ENCODE measurements at regions of chr16 and their contacts with region 1.

Region 1: DNA sequence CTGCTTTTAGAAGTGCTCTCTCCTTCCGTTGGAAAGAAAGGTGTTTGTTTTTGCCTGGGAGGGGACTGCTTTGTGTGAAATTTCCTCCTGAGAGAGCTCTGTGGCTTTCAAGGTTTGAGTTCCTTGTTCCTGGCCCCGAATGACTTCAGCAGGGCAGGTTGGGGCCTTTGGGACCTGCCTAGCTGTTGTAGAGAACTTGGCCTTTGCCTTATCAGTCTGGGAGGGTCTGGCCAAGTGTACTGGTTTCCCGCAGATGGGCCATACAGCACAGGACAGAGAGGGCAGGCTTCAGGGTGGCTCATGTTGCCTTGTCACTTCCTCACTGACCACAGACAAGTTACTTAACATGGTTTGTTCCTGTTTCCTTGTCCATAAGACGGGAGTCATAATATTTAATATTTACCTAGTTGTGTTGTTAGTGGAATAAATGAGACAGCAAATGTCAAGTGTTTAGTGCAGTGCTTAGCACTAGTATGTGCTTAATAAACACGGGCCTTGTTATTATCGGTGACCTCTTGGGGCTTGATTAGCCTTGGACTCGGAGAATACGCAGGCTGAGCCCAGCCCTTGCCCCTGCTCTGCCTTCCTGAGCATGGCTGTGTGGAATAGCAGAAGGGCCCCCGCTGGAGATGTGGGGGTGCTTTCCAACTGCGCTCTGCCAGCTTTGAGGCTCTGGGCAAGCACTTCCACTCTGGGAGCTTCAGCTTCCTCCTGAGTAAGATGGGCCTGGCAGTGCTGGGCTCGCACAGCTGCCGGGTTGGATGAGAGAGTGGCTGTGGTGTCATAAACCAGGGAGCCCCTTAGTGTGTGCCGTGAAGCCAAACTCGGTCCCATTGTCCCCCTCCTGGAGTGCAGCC is 6.6 kb downstream of the PRSS8 start:
- DNase-seq: peak; percentile 91 to 99 (median 96)
- H3K4me3 ChIP-seq: peak overlapping the region in 3 of 7 experiments; percentile 38 to 52 (median 50)
- H3K27ac ChIP-seq: peak overlapping the region; percentile 93 to 97
- H3K4me1 ChIP-seq: peaks cover 6 to 57% (median 49%) of the 10 kb centered on the region in 4 experiments
- H3K27me3 ChIP-seq: no peaks in the 10 kb centered on the region

Region 2: GRCh38 chr16:30010844-30011713 is 1117.9 kb before region 1 on chr16 and contains the start of gene DOC2A:
- CTCF ChIA-PET with region 1: no interaction called
- POLR2A ChIA-PET with region 1: interaction called, 10 read pairs
- DNase-seq: peak in 2 of 3 donors; percentile 61 to 67
- H3K4me3 ChIP-seq: peak within 1 kb of the TSS in 6 of 7 experiments; percentile 35 to 72 (median 64)
- H3K27ac ChIP-seq: no peak within 1 kb of the TSS
- H3K4me1 ChIP-seq: peaks cover 0 to 19% (median 17%) of the 10 kb centered on the region in 4 experiments
- H3K27me3 ChIP-seq: peaks cover 0 to 39% (median 11%) of the 10 kb centered on the region in 5 experiments

Region 3: DNA sequence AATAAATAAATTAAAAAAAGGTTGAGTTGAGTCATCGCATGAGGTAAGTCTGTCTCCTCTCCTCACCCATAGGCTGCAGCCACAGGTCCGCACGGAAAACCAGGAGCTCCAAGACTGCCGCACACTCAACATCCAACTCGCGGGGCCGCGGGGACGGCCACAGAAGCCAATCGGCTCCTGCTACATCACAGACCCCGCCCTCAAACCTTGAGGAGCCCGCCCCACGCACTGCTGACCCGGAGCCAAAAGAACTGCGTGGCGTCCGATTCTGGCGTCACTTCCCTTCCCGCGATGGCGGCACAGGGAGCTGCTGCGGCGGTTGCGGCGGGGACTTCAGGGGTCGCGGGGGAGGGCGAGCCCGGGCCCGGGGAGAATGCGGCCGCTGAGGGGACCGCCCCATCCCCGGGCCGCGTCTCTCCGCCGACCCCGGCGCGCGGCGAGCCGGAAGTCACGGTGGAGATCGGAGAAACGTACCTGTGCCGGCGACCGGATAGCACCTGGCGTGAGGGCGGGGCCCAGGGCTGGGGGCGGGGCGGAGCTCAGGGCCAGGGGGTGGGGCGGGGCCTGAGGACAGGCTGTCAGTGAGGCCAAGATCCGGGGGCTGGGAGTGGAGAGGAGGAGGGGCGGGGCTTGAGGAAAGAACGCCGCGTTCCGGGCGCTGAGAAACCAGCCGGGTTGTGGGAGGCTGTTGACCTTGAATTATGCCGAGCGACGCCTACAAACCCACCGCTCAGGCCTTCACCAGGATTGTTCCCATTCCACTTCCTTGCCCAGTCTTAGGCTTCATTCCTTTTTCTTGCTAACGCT is 11.3 kb before region 1 on chr16 and contains the start of gene KAT8:
- CTCF ChIA-PET with region 1: interaction called, 38 read pairs
- POLR2A ChIA-PET with region 1: interaction called, 18 read pairs
- DNase-seq: peak; percentile 98 to 99 (median 99)
- H3K4me3 ChIP-seq: peak within 1 kb of the TSS; percentile 64 to 96 (median 87)
- H3K27ac ChIP-seq: peak within 1 kb of the TSS; percentile 51 to 88
- H3K4me1 ChIP-seq: peaks cover 12 to 40% (median 34%) of the 10 kb centered on the region in 4 experiments
- H3K27me3 ChIP-seq: no peaks in the 10 kb centered on the region